Ascending aorta (tissue), 2 donors: ENCODE measurements at regions of chr19 and their contacts with region 1.

Region 1: GRCh38 chr19:58002384-58003173 is at the start of gene ZNF606:
- DNase-seq: peak; percentile 25 to 90
- H3K4me3 ChIP-seq: peak within 1 kb of the TSS; percentile 78 to 98
- H3K27ac ChIP-seq: peak within 1 kb of the TSS; percentile 89 to 93
- H3K4me1 ChIP-seq: peaks cover 4 to 11% of the 10 kb centered on the region in 2 donors
- H3K27me3 ChIP-seq: no peaks in the 10 kb centered on the region
- CTCF ChIP-seq: no peak
- total RNA-seq, gene ZNF606: 1.5 TPM

Region 2: DNA sequence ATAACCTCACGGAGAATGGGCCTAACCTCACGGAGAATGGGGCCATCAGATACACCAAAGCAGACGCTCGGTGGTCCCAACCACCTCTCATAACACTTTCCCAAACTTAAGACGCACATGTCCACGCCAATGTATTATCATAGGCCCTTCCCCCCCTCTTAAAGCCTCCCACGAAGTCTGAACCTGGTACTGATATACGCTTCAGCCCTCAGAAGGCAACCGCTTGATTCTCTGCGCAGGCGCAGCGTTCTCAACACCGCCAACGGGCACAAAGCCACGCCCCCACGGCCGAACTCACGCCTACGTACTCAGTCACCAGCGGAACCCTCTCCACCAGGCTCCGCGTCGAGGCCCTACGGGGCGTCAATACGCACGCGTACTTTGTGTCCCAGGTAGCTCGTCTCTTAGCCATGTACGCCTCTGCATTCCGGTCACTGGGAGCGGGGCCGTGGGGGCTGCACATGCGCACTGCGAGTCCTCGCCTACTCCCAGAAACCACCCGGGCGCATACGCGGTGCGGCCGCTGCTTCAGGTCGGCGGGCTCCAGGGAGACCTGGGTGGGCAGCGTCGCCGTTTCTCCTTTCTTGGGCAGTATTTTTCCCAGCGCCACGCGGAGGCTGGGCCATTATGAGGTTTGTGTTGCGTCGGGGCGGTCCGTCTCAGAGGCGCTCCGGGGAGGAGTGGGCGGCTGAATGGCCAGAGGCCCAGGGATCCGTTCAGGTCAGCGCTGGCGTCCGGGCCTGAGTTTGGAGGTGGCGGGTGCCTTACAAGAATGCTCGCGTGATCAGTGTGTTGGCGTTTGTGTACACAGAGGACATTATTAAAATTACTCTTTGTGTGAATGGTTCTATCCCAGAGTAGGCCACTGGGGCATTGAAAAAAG is 1634.5 kb before region 1 on chr19:
- intact Hi-C with region 1: loop called (anchors 2 kb)
- DNase-seq: peak; percentile 60 to 92
- H3K4me3 ChIP-seq: peak overlapping the region; percentile 57 to 74
- H3K27ac ChIP-seq: peak overlapping the region; percentile 74 to 86
- H3K4me1 ChIP-seq: peaks cover 0 to 5% of the 10 kb centered on the region in 2 donors
- H3K27me3 ChIP-seq: no peaks in the 10 kb centered on the region
- CTCF ChIP-seq: no peak

Region 3: DNA sequence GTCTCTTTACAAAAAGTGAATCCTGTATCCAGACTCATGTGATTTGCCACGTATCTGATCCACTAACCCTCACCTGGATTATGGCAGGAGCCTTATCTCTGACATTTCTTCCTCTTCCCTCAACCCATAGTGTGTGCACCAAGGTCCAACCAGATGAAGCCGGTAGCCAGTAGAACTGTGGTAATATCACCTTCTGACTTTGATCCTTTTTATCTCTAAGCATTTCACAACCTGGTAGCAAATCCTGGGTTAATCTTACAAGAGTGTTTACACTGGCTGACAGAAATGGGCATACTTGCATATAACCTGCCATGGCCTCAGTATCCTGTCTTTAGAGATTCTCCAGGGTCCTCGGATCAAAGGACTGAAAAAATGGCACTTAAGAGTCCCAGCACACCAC is 88.0 kb before region 1 on chr19:
- intact Hi-C with region 1: loop called (anchors 1 kb)
- DNase-seq: no peak
- H3K4me3 ChIP-seq: no peak overlapping the region
- H3K27ac ChIP-seq: no peak overlapping the region
- H3K4me1 ChIP-seq: peaks cover 0 to 7% of the 10 kb centered on the region in 2 donors
- H3K27me3 ChIP-seq: no peaks in the 10 kb centered on the region
- CTCF ChIP-seq: no peak

Region 4: DNA sequence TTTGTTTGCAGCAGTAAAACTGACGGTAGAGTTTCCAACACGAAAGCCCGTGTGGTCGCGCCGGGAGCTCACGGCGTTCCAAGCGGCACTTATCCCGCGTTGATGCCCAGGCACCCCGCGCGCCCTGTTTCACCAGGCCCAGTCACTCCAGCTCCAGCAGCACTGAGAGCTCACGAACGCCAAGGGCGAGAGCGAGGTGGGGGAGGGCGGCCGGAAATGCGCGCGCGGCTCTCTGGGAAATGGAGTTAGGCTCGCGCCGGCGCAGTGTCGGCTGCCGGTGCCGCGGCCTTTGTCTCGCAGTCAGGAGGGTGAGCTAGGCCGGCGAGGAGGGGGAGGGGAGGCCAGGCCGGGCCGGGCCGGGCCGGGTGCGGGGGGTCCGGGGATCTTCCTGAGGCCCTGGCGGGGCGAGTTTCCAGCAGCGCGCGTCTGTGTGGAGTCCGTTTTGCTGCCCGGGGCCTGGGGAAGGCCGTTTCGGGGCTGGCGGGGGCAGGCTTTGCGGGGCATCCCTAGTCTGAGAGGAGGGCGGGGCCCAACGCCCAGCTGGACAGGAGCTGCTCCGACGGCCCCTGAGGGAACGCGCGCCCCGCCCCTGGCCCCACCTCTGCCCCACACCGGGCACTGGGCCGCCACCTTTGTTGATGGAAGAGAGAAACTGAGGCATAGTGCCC is 56.6 kb after region 1 on chr19 and contains the start of gene ZNF135:
- intact Hi-C with region 1: loop called (anchors 2 kb)
- DNase-seq: peak; percentile 23 to 90
- H3K4me3 ChIP-seq: peak within 1 kb of the TSS; percentile 78 to 81
- H3K27ac ChIP-seq: peak within 1 kb of the TSS; percentile 91 to 93
- H3K4me1 ChIP-seq: peaks cover 0 to 4% of the 10 kb centered on the region in 2 donors
- H3K27me3 ChIP-seq: no peaks in the 10 kb centered on the region
- CTCF ChIP-seq: no peak
- total RNA-seq, gene ZNF135: 3.7 TPM